Activated CD4-positive, alpha-beta T cell treated with anti-CD3 and anti-CD28 coated beads for 36 hours (primary cell): ENCODE measurements at regions of chr6 and their contacts with region 1.

Region 1: GRCh38 chr6:85482905-85483700 is 33.2 kb downstream of the NT5E start:
- DNase-seq: peak; percentile 91
- ATAC-seq: peak; percentile 96
- H3K4me3 Mint-ChIP-seq: no peak overlapping the region
- H3K27ac Mint-ChIP-seq: peak overlapping the region; percentile 23
- H3K4me1 Mint-ChIP-seq: peaks cover 9% of the 10 kb centered on the region
- H3K27me3 Mint-ChIP-seq: no peaks in the 10 kb centered on the region

Region 2: GRCh38 chr6:85354761-85355618 is 128.1 kb before region 1 on chr6:
- CTCF ChIA-PET with region 1: interaction called, 72 read pairs
- POLR2A ChIA-PET with region 1: interaction called, 3 read pairs
- intact Hi-C with region 1: loop called (anchors 1 kb)
- DNase-seq: peak; percentile 77
- ATAC-seq: peak; percentile 78
- H3K4me3 Mint-ChIP-seq: no peak overlapping the region
- H3K27ac Mint-ChIP-seq: no peak overlapping the region
- H3K4me1 Mint-ChIP-seq: no peaks in the 10 kb centered on the region
- H3K27me3 Mint-ChIP-seq: peaks cover 10% of the 10 kb centered on the region

Region 3: GRCh38 chr6:85416049-85416448 is 67.1 kb before region 1 on chr6:
- CTCF ChIA-PET with region 1: interaction called, 10 read pairs
- POLR2A ChIA-PET with region 1: no interaction called
- intact Hi-C with region 1: no loop called
- DNase-seq: no peak
- ATAC-seq: no peak
- H3K4me3 Mint-ChIP-seq: no peak overlapping the region
- H3K27ac Mint-ChIP-seq: no peak overlapping the region
- H3K4me1 Mint-ChIP-seq: peaks cover 9% of the 10 kb centered on the region
- H3K27me3 Mint-ChIP-seq: peaks cover 5% of the 10 kb centered on the region

Region 4: DNA sequence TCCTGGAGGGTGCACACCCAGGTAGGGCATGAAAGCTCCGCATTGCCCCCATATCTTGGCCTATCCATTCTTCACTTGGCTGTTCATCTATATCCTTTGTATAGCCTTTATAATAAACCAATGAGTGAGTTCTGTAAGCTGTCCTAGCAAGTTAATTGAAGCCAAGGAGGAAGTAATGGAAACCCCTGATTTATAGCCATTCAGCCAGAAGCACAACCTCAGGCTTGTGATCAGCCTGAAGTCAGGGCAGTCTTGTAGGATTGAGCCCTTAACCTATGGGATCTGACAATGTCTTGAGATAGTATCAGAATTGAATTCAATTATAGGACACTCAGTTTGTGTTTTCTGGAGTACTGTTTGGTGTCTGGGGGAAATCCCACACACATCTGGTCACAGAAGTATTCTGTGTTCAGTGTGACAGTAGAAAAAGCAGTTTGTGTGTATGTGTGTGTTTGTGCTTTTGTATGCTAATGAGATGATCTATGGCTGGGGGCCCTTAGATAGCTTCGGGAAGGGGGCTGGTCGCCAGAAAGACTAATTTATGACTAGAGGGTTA is 27.6 kb before region 1 on chr6:
- CTCF ChIA-PET with region 1: interaction called, 36 read pairs
- POLR2A ChIA-PET with region 1: no interaction called
- intact Hi-C with region 1: no loop called
- DNase-seq: no peak
- ATAC-seq: no peak
- H3K4me3 Mint-ChIP-seq: no peak overlapping the region
- H3K27ac Mint-ChIP-seq: no peak overlapping the region
- H3K4me1 Mint-ChIP-seq: peaks cover 70% of the 10 kb centered on the region
- H3K27me3 Mint-ChIP-seq: peaks cover 30% of the 10 kb centered on the region

Region 5: GRCh38 chr6:85498596-85499258 is 15.6 kb after region 1 on chr6:
- CTCF ChIA-PET with region 1: interaction called, 48 read pairs
- POLR2A ChIA-PET with region 1: no interaction called
- intact Hi-C with region 1: no loop called
- DNase-seq: no peak
- ATAC-seq: peak; percentile 54
- H3K4me3 Mint-ChIP-seq: no peak overlapping the region
- H3K27ac Mint-ChIP-seq: no peak overlapping the region
- H3K4me1 Mint-ChIP-seq: peaks cover 18% of the 10 kb centered on the region
- H3K27me3 Mint-ChIP-seq: no peaks in the 10 kb centered on the region